K562 (cell line): ENCODE measurements at regions of chr4 and their contacts with region 1.

Region 1: GRCh38 chr4:173257732-173258717 is 76.1 kb downstream of the HMGB2 start:
- DNase-seq: peak; percentile 48 to 77 (median 56)
- ATAC-seq: peak; percentile 96
- H3K4me3 ChIP-seq: no peak overlapping the region
- H3K27ac ChIP-seq: no peak overlapping the region
- H3K4me1 ChIP-seq: peaks cover 0 to 10% of the 10 kb centered on the region in 2 experiments; a peak in 3 of 5 replicates
- H3K27me3 ChIP-seq: no peaks in the 10 kb centered on the region
- CTCF ChIP-seq: peak; percentile 75 to 86 (median 85)
- EP300 ChIP-seq: peak; percentile 54; the same call in 1 of the 2 replicates
- POLR2A ChIP-seq: no peak
- RAD21 ChIP-seq: peak; percentile 84 to 85

Region 2: GRCh38 chr4:172892300-172892699 is 365.7 kb before region 1 on chr4:
- CTCF ChIA-PET with region 1: no interaction called
- POLR2A ChIA-PET with region 1: interaction called, 3 read pairs
- in situ Hi-C with region 1: no loop called
- intact Hi-C with region 1: loop called (anchors 10 kb)
- DNase-seq: peak; percentile 17 to 45 (median 27)
- ATAC-seq: peak; percentile 80
- H3K4me3 ChIP-seq: no peak overlapping the region
- H3K27ac ChIP-seq: no peak overlapping the region
- H3K4me1 ChIP-seq: no peaks in the 10 kb centered on the region
- H3K27me3 ChIP-seq: no peaks in the 10 kb centered on the region
- CTCF ChIP-seq: peak; percentile 56 to 71 (median 70)
- EP300 ChIP-seq: no peak
- POLR2A ChIP-seq: no peak
- RAD21 ChIP-seq: peak; percentile 8 to 60; a peak in 2 of 4 replicates

Region 3: DNA sequence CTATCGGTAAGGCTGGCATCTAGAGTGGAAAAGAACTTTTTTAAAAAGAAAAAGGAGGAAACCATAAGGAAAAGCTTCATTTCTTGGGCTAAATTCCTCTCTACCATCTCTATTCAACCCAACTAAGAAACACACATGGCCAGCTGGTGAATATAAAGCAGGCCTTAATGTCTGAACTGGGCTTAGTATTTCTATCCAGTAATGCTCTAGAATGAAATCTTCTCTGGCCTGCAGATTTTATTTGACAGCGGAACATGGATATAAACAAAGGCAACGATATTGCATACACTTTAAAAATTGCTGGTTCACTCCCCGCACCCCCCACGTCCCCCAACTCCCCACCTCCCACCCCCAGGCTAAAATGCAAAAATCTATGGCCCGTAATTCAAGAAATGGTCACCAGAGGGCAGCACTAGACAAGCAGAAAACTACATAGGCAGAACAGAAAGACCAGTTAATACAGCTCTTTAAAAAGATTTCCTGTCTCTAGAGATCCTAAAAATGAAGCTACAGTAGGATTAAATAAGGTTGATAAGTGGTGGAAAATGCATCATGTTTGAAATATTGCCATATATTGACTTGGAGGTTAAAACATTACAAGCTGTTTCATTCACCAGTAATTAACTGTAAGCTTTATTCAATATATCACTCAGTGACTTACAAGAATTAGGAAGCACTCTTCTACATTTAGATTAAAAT is 244.6 kb before region 1 on chr4:
- CTCF ChIA-PET with region 1: interaction called, 19 read pairs
- POLR2A ChIA-PET with region 1: no interaction called
- in situ Hi-C with region 1: loop called (anchors 5 kb)
- intact Hi-C with region 1: loop called (anchors 1 kb)
- DNase-seq: peak; percentile 57 to 62 (median 62)
- ATAC-seq: peak; percentile 82
- H3K4me3 ChIP-seq: no peak overlapping the region
- H3K27ac ChIP-seq: no peak overlapping the region
- H3K4me1 ChIP-seq: peaks cover 0 to 4% of the 10 kb centered on the region in 2 experiments; a peak in 1 of 5 replicates
- H3K27me3 ChIP-seq: no peaks in the 10 kb centered on the region; a peak in 1 of 5 replicates
- CTCF ChIP-seq: peak; percentile 42 to 74 (median 64); a peak in 5 of 6 replicates
- EP300 ChIP-seq: no peak
- POLR2A ChIP-seq: no peak
- RAD21 ChIP-seq: peak; percentile 66 to 77

Region 4: DNA sequence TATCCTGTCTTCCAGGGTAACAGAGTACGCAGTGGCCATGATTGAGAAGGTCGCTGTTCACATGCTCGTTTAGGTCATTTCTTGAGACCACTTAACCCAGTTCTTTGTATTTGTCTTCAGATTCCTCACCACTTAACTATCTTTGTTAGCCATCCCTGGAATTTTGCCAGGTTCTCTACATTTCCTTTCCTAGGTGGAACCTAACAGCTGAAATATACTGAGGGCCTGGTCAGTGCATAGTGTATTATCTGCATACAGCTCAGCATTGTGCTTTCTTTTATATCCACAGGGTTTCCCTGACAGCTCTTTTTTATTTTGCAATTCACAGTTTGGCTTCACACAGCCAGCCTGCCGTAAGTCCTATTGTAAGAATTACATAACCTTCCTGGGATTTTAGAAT is 238.3 kb before region 1 on chr4:
- CTCF ChIA-PET with region 1: interaction called, 20 read pairs
- POLR2A ChIA-PET with region 1: no interaction called
- in situ Hi-C with region 1: loop called (anchors 5 kb)
- intact Hi-C with region 1: no loop called
- DNase-seq: no peak
- ATAC-seq: no peak
- H3K4me3 ChIP-seq: no peak overlapping the region
- H3K27ac ChIP-seq: no peak overlapping the region
- H3K4me1 ChIP-seq: no peaks in the 10 kb centered on the region
- H3K27me3 ChIP-seq: no peaks in the 10 kb centered on the region; a peak in 1 of 5 replicates
- CTCF ChIP-seq: no peak
- EP300 ChIP-seq: no peak
- POLR2A ChIP-seq: no peak
- RAD21 ChIP-seq: no peak

Region 5: DNA sequence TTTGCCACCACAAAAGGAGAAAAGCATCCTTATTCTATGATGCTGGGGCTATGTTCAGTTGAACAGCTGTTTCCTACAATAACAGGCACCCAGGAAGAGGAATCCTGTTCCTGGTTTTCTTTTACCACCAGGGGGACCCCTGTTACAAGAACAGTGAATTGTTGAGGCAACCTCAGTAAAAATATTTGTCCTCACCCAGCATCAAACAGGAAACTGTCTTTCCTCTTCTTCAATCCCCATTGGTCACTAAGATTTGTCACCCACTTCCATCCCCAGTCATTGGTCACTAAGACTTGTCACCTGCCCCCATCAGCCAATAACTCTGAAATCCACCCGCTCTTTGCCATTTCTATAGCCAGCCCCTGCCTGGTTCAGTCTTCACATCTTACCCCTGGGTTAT is 232.9 kb before region 1 on chr4:
- CTCF ChIA-PET with region 1: interaction called, 20 read pairs
- POLR2A ChIA-PET with region 1: no interaction called
- in situ Hi-C with region 1: no loop called
- intact Hi-C with region 1: loop called (anchors 1 kb)
- DNase-seq: peak; percentile 52 to 77 (median 58)
- ATAC-seq: peak; percentile 95
- H3K4me3 ChIP-seq: no peak overlapping the region
- H3K27ac ChIP-seq: no peak overlapping the region
- H3K4me1 ChIP-seq: no peaks in the 10 kb centered on the region
- H3K27me3 ChIP-seq: no peaks in the 10 kb centered on the region
- CTCF ChIP-seq: peak; percentile 72 to 87 (median 73)
- EP300 ChIP-seq: no peak
- POLR2A ChIP-seq: no peak
- RAD21 ChIP-seq: peak; percentile 87 to 93

Region 6: DNA sequence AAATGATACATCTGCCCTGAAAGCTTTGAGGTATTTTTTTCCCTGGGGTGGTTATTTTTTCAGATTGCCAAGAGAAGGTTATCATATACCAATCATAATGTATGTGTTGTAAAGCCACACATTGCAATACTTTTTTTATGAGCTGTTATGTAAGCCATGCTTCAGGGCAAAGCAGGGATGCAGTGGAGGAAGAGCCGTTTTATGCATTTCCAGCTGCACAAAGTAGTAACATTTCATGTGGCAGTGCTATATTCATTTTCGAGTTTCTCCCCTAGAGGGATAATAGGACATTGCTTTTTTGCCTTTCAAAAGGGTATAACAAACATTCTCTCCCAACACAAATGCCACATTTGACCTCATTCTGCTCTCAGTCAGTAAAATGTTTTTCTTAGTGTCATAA is 20.9 kb before region 1 on chr4:
- CTCF ChIA-PET with region 1: no interaction called
- POLR2A ChIA-PET with region 1: no interaction called
- in situ Hi-C with region 1: no loop called
- intact Hi-C with region 1: no loop called
- DNase-seq: peak in 1 of 4 experiments; percentile 11
- ATAC-seq: peak; percentile 36
- H3K4me3 ChIP-seq: no peak overlapping the region
- H3K27ac ChIP-seq: no peak overlapping the region
- H3K4me1 ChIP-seq: peaks cover 0 to 9% of the 10 kb centered on the region in 2 experiments; a peak in 3 of 5 replicates
- H3K27me3 ChIP-seq: no peaks in the 10 kb centered on the region
- CTCF ChIP-seq: no peak
- EP300 ChIP-seq: no peak
- POLR2A ChIP-seq: no peak
- RAD21 ChIP-seq: no peak

Region 7: GRCh38 chr4:173301518-173302201 is 43.6 kb after region 1 on chr4:
- CTCF ChIA-PET with region 1: no interaction called
- POLR2A ChIA-PET with region 1: no interaction called
- in situ Hi-C with region 1: no loop called
- intact Hi-C with region 1: loop called (anchors 1 kb)
- DNase-seq: peak; percentile 18 to 57 (median 19)
- ATAC-seq: peak; percentile 63
- H3K4me3 ChIP-seq: no peak overlapping the region
- H3K27ac ChIP-seq: no peak overlapping the region
- H3K4me1 ChIP-seq: no peaks in the 10 kb centered on the region
- H3K27me3 ChIP-seq: no peaks in the 10 kb centered on the region
- CTCF ChIP-seq: peak; percentile 43 to 83 (median 58); a peak in 5 of 6 replicates
- EP300 ChIP-seq: no peak
- POLR2A ChIP-seq: no peak
- RAD21 ChIP-seq: peak; percentile 73 to 75